RWPE1 (cell line): ENCODE measurements at regions of chr12 and their contacts with region 1.

Region 1: GRCh38 chr12:14664510-14664909 is 31.9 kb downstream of the GUCY2C start:
- DNase-seq: peak; percentile 30
- H3K27ac ChIP-seq: no peak overlapping the region
- CTCF ChIP-seq: peak; percentile 24; the same call in 1 of the 2 replicates

Region 2: DNA sequence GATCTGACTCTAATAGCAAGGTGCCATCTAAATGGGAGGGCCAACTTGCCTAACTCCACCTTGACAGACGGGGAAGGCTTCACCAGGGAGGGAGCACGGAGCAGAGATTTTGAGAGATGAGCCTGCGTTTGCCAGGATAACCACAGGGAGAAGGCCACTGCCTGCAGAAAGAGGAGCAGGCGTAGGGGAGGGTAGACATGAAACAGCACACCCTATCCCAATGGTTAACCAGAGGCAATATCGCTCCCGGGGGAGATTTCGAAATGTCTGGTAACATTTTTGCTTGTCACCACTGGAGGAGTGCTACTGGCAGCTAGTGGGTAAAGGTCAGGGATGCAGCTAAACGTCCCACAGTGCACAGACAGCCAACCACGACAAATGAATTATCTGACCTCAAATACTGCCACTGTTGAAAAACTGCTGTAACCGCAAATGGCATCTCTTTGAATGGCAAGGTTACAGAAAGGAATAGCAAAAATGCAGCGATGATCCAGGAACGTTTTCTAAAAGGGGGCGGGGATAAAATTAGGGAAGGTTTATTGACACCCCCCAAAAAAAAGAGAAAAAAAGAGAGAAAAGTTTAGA is 425.1 kb before region 1 on chr12:
- CTCF ChIA-PET with region 1: interaction called, 12 read pairs
- POLR2A ChIA-PET with region 1: no interaction called
- DNase-seq: no peak
- H3K27ac ChIP-seq: no peak overlapping the region
- CTCF ChIP-seq: no peak

Region 3: GRCh38 chr12:14696265-14696741 is 31.8 kb after region 1 on chr12 and contains the start of gene GUCY2C:
- CTCF ChIA-PET with region 1: no interaction called
- POLR2A ChIA-PET with region 1: no interaction called
- DNase-seq: no peak
- H3K27ac ChIP-seq: no peak within 1 kb of the TSS
- CTCF ChIP-seq: no peak